Caco-2 (cell line): ENCODE measurements at regions of chr20 and their contacts with region 1.

Region 1: DNA sequence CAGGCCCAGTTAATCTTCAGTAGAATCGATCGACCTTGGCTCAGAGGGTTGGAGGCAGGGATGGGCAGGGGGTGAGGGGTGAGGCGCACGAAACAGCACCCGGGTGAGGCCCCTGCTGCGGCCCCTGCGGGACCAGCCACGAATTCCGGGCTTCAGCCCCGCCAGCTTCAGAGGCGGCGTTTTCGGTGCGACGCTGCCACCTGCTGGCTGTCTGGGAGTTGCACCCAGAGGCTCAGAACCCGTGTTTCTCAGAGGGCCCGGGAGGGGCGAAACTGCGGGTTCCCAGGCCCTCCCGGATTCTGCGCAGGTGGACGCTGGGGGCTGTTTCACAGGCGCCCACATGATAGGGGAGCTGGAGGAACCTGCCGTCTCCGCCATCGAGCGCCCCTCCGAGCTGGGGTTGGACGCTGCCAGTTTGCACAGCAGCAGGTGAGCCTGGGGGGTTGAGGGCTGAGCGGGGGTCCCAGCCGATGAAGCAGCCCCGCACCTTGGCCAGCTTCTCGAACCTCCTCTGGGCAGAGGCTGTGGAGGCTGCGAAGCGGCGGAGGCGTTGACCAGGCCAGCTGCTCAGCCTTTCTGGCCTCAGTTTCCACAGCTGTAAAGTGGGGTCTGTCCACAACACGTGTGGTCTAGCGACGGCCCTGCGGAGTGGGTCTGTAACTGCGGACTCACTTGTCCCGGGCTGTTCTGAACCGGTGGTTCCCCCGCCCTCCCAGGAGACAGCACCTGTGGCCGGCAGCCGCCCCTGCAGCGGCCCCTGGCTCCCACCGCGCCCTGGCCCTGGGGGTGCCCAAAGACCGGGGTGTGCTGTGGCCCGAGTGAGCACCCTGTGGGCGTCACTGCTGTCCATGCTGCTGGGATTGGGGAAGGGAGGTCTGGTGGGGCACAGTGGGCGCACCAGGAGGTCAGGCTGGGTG is 2.5 kb upstream of the BHLHE23 start:
- DNase-seq: peak; percentile 89 to 96
- H3K4me3 ChIP-seq: peak overlapping the region; percentile 27
- H3K4me3 Mint-ChIP-seq: peak overlapping the region; percentile 66
- H3K27ac Mint-ChIP-seq: peak overlapping the region; percentile 89
- H3K4me1 ChIP-seq: peaks cover 24% of the 10 kb centered on the region
- H3K4me1 Mint-ChIP-seq: peaks cover 27% of the 10 kb centered on the region
- H3K27me3 ChIP-seq: no peaks in the 10 kb centered on the region
- H3K27me3 Mint-ChIP-seq: no peaks in the 10 kb centered on the region
- CTCF ChIP-seq: peak; percentile 99 to 100

Region 2: GRCh38 chr20:62872184-62872847 is 137.0 kb before region 1 on chr20:
- CTCF ChIA-PET with region 1: interaction called, 7 read pairs
- POLR2A ChIA-PET with region 1: no interaction called
- intact Hi-C with region 1: loop called (anchors 2 kb)
- DNase-seq: no peak
- H3K4me3 ChIP-seq: no peak overlapping the region
- H3K4me3 Mint-ChIP-seq: peak overlapping the region; percentile 72
- H3K27ac Mint-ChIP-seq: peak overlapping the region; percentile 38
- H3K4me1 ChIP-seq: peaks cover 9% of the 10 kb centered on the region
- H3K4me1 Mint-ChIP-seq: peaks cover 21% of the 10 kb centered on the region
- H3K27me3 ChIP-seq: no peaks in the 10 kb centered on the region
- H3K27me3 Mint-ChIP-seq: no peaks in the 10 kb centered on the region
- CTCF ChIP-seq: no peak

Region 3: DNA sequence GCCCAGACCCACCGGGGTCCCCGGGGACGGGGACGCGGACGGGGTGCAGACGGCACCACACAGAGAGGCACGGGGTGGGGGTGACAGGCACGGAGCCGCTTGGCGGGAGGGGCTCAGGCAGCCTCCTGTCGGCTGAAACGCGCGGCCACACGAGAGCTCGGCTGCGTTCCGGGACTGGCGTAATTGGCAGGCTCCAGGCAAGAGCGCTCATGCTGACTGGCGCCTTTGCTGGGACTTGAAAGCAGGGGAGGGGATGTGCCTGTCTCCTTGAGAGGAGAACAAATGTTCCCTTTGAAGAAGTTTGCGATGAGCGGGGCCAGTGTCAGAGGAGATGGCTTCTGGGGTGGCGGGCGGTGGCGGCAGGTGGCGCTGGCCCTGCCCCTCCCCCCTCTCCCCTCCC is 28.3 kb before region 1 on chr20:
- CTCF ChIA-PET with region 1: interaction called, 20 read pairs
- POLR2A ChIA-PET with region 1: interaction called, 3 read pairs
- intact Hi-C with region 1: no loop called
- DNase-seq: no peak
- H3K4me3 ChIP-seq: no peak overlapping the region
- H3K4me3 Mint-ChIP-seq: no peak overlapping the region
- H3K27ac Mint-ChIP-seq: no peak overlapping the region
- H3K4me1 ChIP-seq: no peaks in the 10 kb centered on the region
- H3K4me1 Mint-ChIP-seq: no peaks in the 10 kb centered on the region
- H3K27me3 ChIP-seq: no peaks in the 10 kb centered on the region
- H3K27me3 Mint-ChIP-seq: peaks cover 4% of the 10 kb centered on the region
- CTCF ChIP-seq: no peak

Region 4: GRCh38 chr20:63309261-63310071 is 300.2 kb after region 1 on chr20:
- CTCF ChIA-PET with region 1: no interaction called
- POLR2A ChIA-PET with region 1: no interaction called
- intact Hi-C with region 1: no loop called
- DNase-seq: peak; percentile 79 to 84
- H3K4me3 ChIP-seq: no peak overlapping the region
- H3K4me3 Mint-ChIP-seq: no peak overlapping the region
- H3K27ac Mint-ChIP-seq: no peak overlapping the region
- H3K4me1 ChIP-seq: no peaks in the 10 kb centered on the region
- H3K4me1 Mint-ChIP-seq: no peaks in the 10 kb centered on the region
- H3K27me3 ChIP-seq: peaks cover 1% of the 10 kb centered on the region; the same call in 1 of the 2 replicates
- H3K27me3 Mint-ChIP-seq: peaks cover 3% of the 10 kb centered on the region
- CTCF ChIP-seq: peak; percentile 99 to 100